Activated CD4-positive, alpha-beta T cell treated with anti-CD3 and anti-CD28 coated beads, Interleukin-2, amount 10 ng/mL, durations not matched to agents 24 days and 14 days (primary cell): ENCODE measurements at regions of chr1 and their contacts with region 1.

Region 1: DNA sequence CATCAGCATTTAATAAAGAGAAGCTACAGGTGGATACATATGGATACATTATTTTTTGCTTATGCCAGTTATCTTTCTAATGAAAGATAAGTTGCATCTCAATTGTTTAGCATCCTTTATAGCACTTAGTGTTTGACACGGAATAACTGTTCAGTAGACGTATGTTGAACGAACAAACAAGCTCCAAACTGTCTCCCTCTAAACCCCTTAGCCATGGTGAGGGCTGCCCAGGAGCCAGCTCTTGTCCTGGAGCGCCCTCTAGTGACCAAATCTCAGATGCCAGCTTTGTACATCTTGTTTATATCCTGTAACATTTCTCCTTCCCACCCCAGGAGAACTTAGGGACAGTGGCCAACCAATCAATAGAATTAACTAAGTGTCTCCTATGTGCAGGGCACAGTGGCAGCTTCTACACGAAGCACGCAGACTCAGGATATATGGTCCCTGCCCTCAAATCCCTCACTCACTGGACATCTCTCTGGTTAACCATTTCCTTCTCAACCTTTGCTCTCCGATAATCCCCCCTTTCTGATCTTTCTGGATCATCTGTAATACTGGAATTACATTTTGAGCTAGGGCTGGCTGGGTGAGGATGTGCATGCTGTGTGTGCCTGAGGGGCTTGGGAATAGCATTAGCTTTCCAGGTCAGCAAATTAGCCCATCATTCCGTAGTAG is 22.9 kb downstream of the KCNA10 start:
- DNase-seq: peak; percentile 93
- H3K4me3 Mint-ChIP-seq: no peak overlapping the region
- H3K27ac Mint-ChIP-seq: no peak overlapping the region
- H3K4me1 Mint-ChIP-seq: peaks cover 3% of the 10 kb centered on the region
- H3K27me3 Mint-ChIP-seq: peaks cover 3% of the 10 kb centered on the region

Region 2: DNA sequence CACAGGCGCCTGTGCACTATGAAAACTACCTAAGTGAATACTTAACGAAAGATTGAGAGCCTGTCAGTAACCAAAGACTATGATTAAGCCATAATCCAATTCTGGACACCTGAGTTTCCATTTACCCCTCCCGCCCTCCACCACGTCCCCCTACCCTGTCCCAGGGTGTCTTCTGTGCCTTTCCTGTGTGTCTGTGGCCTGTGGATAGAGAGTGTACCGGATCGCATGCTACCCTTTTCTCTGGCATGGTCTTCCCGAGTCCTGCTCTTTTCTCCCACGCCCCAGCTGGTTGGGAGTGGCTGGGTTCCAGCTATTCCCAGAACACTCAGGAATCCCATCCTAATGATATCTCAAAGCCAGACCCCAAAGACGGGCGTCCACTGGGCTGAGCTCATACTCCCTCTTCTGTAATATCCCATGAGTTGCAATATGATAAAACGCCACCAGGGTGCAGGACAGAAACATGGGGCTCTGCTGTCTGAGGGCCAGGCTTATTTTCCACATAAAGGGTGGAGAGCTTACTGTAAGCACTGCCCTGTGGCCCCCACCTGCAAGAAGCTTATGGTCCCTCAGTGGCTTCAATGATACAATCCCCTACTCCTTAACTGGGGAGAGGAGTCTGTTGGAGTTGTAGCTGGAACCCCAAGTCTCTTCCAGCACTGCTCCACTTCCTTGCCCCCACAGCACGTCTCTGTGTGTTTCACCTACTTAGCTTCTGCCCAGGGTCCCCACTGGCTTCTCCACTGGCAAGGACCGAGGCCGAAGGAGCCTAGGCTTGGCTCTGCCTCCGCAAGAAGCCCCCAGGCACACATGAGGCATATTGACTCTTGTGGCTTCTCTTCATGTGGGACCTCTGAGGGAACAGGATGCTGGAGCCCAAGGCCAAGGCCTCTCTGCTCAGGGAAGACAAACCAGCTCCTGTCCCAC is 408.0 kb before region 1 on chr1:
- intact Hi-C with region 1: loop called (anchors 1 kb)
- DNase-seq: peak; percentile 87
- H3K4me3 Mint-ChIP-seq: no peak overlapping the region
- H3K27ac Mint-ChIP-seq: no peak overlapping the region
- H3K4me1 Mint-ChIP-seq: peaks cover 17% of the 10 kb centered on the region
- H3K27me3 Mint-ChIP-seq: peaks cover 59% of the 10 kb centered on the region

Region 3: GRCh38 chr1:110196917-110197765 is 298.9 kb before region 1 on chr1:
- intact Hi-C with region 1: loop called (anchors 1 kb)
- DNase-seq: peak; percentile 86
- H3K4me3 Mint-ChIP-seq: no peak overlapping the region
- H3K27ac Mint-ChIP-seq: no peak overlapping the region
- H3K4me1 Mint-ChIP-seq: no peaks in the 10 kb centered on the region
- H3K27me3 Mint-ChIP-seq: no peaks in the 10 kb centered on the region

Region 4: DNA sequence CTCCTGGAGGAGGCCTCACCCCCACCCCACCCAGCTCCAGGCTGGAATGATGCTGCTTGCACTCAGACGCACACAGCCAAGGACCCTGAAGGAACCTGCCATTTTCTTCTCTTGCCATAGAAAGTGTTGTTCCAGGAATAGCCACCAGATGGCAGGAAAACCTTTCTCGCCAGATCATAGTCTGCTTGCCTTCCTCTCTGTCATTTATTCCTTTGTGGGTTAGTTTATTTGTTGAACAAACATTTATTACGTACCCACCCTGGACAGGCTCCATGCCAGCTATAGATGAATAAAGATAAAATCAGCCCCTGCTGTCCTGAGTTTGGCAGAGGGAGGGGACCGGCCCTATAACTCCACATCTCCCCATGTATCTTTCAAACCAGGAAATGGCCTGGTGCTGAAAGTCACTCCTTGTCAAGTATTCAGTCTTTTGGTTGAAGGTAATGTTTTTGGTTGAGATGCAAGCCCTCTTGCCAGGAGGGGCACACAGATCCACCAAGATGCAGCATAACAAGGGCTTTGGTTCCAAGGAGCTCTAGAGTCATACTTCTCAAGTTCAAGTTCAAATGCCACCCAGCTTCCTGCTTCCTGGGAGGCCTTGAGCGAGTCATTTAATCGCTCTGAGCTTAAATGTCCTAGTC is 292.9 kb before region 1 on chr1:
- intact Hi-C with region 1: loop called (anchors 1 kb)
- DNase-seq: peak; percentile 94
- H3K4me3 Mint-ChIP-seq: no peak overlapping the region
- H3K27ac Mint-ChIP-seq: peak overlapping the region; percentile 90
- H3K4me1 Mint-ChIP-seq: peaks cover 13% of the 10 kb centered on the region
- H3K27me3 Mint-ChIP-seq: no peaks in the 10 kb centered on the region

Region 5: DNA sequence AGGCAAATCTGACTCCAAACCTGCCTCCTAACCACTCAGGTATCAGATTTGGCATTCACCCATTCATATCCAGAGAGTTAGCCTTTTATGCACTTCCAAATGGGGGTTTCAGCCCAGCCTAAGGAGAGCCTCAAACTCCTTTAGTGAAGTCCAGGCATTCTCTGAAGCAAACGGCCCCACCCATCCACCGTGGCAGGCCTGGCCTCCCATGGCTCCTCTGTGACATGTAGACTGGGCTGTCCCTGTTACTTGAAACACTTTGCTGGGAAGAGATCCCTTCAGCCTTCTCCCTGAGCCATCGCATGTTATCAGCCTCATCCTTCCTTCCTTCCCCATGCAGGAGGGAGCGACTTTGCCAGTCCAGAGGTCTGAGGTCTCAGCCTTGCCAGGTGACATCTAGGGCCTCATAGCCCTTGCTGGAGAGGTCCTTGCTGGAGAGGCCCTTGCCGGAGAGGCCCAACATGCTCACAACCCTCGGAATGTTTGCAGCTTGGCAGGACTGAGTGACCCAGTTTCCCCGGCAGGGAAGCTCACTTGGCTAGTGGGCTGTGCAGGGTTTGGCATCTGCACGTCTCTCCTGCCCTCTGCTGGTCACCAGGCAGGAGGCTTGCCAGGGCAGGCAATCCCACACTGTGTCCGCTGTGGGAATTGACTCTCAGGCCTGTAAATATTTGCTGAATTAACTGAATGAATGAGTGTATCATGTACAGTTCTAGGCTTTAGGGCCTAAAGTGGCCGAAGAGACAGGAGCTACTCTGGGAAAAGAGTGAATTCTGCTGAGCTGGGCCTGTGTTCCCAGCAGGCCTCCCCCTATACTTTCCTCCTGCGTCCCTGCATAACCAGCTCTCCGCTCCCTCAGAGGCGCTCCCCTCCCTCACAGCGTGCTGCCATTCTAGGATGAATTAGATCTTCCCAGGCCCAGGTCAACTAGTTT is 183.6 kb before region 1 on chr1:
- intact Hi-C with region 1: loop called (anchors 10 kb)
- DNase-seq: peak; percentile 91
- H3K4me3 Mint-ChIP-seq: no peak overlapping the region
- H3K27ac Mint-ChIP-seq: no peak overlapping the region
- H3K4me1 Mint-ChIP-seq: no peaks in the 10 kb centered on the region
- H3K27me3 Mint-ChIP-seq: no peaks in the 10 kb centered on the region

Region 6: GRCh38 chr1:110412576-110412975 is 83.5 kb before region 1 on chr1:
- intact Hi-C with region 1: loop called (anchors 1 kb)
- DNase-seq: peak; percentile 89
- H3K4me3 Mint-ChIP-seq: no peak overlapping the region
- H3K27ac Mint-ChIP-seq: no peak overlapping the region
- H3K4me1 Mint-ChIP-seq: peaks cover 12% of the 10 kb centered on the region
- H3K27me3 Mint-ChIP-seq: no peaks in the 10 kb centered on the region

Region 7: DNA sequence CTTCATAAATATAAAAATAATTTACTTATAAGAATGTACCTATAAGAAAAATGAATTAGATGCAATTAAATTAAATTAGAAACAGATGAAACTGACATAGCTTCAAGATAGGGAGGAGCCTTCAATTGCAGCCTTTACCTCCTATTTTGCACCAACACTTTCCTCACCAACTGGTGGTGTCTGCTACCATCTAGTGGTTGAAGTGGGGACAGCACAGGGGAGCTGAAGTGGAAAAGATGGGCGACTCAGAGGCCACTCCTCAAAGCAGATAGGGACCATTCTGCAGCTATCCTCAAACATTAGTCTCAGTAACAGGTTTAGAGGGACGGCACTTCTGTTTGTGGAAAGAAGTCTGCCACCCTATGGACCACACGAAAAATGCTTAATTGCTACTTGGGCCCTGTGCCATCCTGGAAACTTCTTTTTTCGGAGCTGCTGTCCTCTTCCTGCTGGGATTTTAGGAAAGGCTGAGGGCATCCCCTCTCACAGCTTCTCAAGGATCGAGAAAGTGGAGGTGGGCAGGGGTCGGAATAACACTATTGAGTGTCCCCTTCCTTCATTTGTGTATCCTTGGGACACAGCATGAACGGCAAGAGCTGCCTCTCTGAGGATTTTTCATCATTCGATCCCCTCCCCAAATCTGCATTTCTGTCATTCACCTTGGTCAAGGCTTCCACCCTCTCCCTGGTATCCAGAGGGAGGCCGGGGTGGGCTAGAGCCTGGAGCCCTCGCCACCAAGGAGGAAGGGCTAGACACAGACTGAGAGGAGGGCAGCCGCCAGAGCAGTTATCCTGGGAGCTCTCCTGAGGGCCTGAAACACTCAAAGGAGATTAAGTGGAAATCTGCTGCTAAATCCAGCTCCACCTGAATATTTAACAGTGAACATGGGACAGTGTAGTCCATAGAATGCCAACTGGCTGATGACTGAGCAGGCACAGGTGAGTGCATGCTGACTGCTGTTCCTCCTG is 35.5 kb before region 1 on chr1:
- intact Hi-C with region 1: loop called (anchors 5 kb)
- DNase-seq: peak; percentile 96
- H3K4me3 Mint-ChIP-seq: no peak overlapping the region
- H3K27ac Mint-ChIP-seq: no peak overlapping the region
- H3K4me1 Mint-ChIP-seq: no peaks in the 10 kb centered on the region
- H3K27me3 Mint-ChIP-seq: no peaks in the 10 kb centered on the region

Region 8: GRCh38 chr1:110619412-110620249 is 123.6 kb after region 1 on chr1:
- intact Hi-C with region 1: no loop called
- DNase-seq: peak; percentile 97
- H3K4me3 Mint-ChIP-seq: peak overlapping the region; percentile 86
- H3K27ac Mint-ChIP-seq: peak overlapping the region; percentile 79
- H3K4me1 Mint-ChIP-seq: peaks cover 46% of the 10 kb centered on the region
- H3K27me3 Mint-ChIP-seq: peaks cover 4% of the 10 kb centered on the region